ENCODE measurements at regions of chr7 and their contacts with region 1.

Region 1: DNA sequence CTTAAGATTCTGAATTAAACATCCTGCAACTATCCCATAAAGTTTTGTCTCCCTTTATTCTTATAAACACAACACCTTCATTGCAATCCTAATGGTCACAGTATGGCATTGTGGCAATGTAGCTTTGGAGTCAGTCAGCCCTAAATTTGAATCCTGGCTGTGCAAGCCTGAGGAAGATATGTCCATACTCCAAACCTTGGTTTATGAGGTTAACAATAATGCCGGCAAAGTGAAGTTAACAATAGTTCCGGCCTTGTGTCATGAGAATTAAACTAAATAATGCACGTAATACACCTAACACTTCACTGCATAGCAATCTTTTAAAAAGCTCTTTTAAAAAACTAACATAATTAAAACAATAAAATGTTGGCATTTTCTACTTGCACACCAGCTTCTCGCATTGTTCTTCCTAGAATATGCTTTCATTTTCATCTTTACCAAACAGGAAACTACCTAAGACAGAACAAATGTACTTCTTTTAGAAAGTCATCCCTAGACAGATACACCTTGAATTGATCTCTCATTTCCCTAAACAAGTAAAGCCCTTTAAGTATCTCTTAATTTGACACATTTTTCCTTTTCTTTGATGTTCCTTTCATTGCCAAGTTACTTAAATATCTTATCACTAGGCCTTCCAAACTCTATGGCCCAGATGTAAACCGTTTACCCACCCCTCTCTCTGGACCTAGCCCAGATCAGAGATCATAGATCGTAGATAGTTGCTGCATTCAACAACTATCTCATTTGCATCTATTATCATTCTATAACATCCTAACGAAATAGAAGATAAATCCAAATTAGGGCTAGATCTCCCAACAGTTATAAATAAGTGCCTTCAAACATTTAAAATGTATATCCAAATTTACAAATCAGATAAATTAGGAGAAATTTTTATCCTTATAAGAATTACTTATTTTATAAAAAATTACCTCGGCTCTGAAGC is 66.7 kb downstream of the CREB3L2 start:
- DNase-seq: peak; percentile 30
- ATAC-seq: peak; percentile 88
- H3K4me3 ChIP-seq: peak overlapping the region; percentile 73
- H3K27ac ChIP-seq: peak overlapping the region; percentile 92
- H3K4me1 ChIP-seq: peaks cover 35% of the 10 kb centered on the region
- H3K27me3 ChIP-seq: no peaks in the 10 kb centered on the region
- CTCF ChIP-seq: no peak
- EP300 ChIP-seq: peak in 1 of 2 experiments; percentile 26; a peak in 1 of 4 replicates
- POLR2A ChIP-seq: no peak
- RAD21 ChIP-seq: no peak

Region 2: GRCh38 chr7:136741941-136742340 is 1193.3 kb before region 1 on chr7:
- CTCF ChIA-PET with region 1: no interaction called
- POLR2A ChIA-PET with region 1: no interaction called
- RAD21 ChIA-PET with region 1: no interaction called
- SMC1A ChIA-PET with region 1: no interaction called
- in situ Hi-C with region 1: no loop called
- intact Hi-C with region 1: no loop called
- DNase-seq: no peak
- ATAC-seq: no peak
- H3K4me3 ChIP-seq: no peak overlapping the region
- H3K27ac ChIP-seq: no peak overlapping the region
- H3K4me1 ChIP-seq: no peaks in the 10 kb centered on the region
- H3K27me3 ChIP-seq: no peaks in the 10 kb centered on the region
- CTCF ChIP-seq: no peak
- EP300 ChIP-seq: no peak
- POLR2A ChIP-seq: no peak
- RAD21 ChIP-seq: no peak

Region 3: GRCh38 chr7:137820677-137821420 is 114.4 kb before region 1 on chr7:
- CTCF ChIA-PET with region 1: no interaction called
- POLR2A ChIA-PET with region 1: no interaction called
- RAD21 ChIA-PET with region 1: no interaction called
- SMC1A ChIA-PET with region 1: no interaction called
- in situ Hi-C with region 1: no loop called
- intact Hi-C with region 1: no loop called
- DNase-seq: no peak
- ATAC-seq: peak; percentile 91
- H3K4me3 ChIP-seq: no peak overlapping the region
- H3K27ac ChIP-seq: no peak overlapping the region
- H3K4me1 ChIP-seq: peaks cover 6% of the 10 kb centered on the region
- H3K27me3 ChIP-seq: no peaks in the 10 kb centered on the region
- CTCF ChIP-seq: no peak
- EP300 ChIP-seq: no peak; a peak in 1 of 4 replicates
- POLR2A ChIP-seq: no peak
- RAD21 ChIP-seq: no peak

Region 4: GRCh38 chr7:137920637-137921399 is 14.4 kb before region 1 on chr7:
- CTCF ChIA-PET with region 1: interaction called, 3 read pairs
- POLR2A ChIA-PET with region 1: interaction called, 14 read pairs
- RAD21 ChIA-PET with region 1: interaction called, 3 read pairs
- SMC1A ChIA-PET with region 1: interaction called, 17 read pairs
- in situ Hi-C with region 1: no loop called
- intact Hi-C with region 1: no loop called
- DNase-seq: no peak
- ATAC-seq: no peak
- H3K4me3 ChIP-seq: no peak overlapping the region
- H3K27ac ChIP-seq: no peak overlapping the region
- H3K4me1 ChIP-seq: peaks cover 30% of the 10 kb centered on the region
- H3K27me3 ChIP-seq: no peaks in the 10 kb centered on the region
- CTCF ChIP-seq: no peak
- EP300 ChIP-seq: no peak
- POLR2A ChIP-seq: no peak
- RAD21 ChIP-seq: no peak

Region 5: DNA sequence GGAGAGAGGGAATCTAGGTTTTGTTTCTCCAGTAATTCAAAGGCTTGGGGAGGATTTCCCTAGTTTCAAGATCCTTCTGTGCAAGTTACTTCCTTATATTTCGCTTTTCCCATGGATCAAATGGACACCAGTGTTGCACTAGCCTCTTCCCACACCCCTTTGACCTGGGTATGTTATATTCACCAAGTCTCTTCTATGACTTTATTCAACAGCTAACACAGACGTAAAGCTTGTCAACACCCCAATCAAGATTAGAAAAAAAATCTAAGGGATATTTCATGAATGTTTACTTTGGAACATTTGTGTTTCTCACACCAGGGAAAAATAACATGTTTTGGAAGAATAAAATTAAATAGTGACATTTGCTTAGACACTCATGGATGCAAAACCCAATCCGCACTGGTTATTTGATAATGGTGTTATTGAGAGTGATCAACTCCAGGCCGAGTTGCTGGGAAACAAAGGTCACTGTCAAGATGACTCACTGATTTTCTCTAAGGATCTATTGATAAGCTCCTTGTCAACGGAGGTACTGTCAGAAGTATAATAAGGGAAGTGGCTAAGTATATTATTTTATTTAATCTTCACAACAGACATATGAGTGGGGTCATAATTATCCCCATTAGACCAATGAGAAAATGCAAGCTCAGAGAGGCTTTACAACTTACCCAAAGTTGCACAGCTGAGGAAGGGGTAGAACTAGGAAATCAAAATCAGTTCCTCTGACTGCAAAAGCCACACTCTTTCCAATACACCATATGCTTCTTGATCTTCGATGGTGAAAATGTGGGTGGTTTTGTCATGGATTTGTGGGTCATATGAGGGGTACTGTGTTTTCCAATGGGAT is 14.4 kb after region 1 on chr7:
- CTCF ChIA-PET with region 1: interaction called, 8 read pairs
- POLR2A ChIA-PET with region 1: interaction called, 5 read pairs
- RAD21 ChIA-PET with region 1: interaction called, 3 read pairs
- SMC1A ChIA-PET with region 1: interaction called, 11 read pairs
- in situ Hi-C with region 1: no loop called
- intact Hi-C with region 1: no loop called
- DNase-seq: no peak
- ATAC-seq: no peak
- H3K4me3 ChIP-seq: no peak overlapping the region
- H3K27ac ChIP-seq: no peak overlapping the region
- H3K4me1 ChIP-seq: peaks cover 9% of the 10 kb centered on the region; the same call in 1 of the 2 replicates
- H3K27me3 ChIP-seq: no peaks in the 10 kb centered on the region
- CTCF ChIP-seq: no peak
- EP300 ChIP-seq: no peak
- POLR2A ChIP-seq: no peak
- RAD21 ChIP-seq: no peak

Region 6: DNA sequence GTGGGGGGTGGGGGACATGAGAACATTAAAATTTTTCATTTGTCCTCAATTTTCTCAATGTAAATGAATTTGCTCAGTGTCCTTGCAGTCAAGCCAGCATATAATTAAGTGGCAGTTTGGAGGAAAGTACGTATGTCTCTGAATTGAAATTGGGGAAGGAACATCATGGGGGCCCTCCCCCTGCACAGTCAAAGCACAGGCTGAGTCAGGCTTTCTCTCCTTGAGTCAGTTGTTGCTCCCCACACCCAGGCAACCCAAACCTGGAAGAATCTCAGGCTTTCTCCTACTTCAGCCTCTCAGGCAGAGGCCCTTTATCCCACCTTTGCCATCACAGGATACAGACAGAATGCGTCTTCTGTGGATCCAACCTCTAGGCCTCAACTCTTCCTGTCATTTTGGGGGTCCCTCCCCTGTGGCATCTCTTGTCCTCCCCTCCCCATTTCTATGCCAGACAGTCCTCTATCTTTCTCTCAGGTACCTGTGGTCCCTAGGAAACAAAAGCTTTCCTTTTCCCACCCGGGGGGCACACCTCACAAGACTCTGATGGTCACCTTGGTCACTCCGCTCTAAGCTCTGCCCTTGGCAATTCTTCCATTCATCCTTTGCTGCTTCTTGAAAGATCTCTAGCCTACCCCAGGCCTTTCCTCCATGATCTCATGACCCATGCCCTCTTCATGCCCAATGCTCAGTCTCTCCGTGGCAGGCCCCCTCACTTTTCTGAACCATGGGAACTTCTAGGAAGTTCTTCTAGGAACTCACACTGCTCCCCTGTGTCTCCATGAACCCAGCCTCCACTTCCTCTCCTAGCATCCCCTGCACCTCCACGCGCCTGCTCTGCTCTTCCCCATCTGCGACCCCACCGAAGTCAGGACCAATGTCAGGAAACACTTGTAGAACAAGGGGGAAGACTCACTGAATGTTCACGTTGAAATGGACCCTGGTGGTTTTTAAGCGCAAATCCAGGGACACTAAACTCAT is 26.3 kb after region 1 on chr7:
- CTCF ChIA-PET with region 1: interaction called, 3 read pairs
- POLR2A ChIA-PET with region 1: no interaction called
- RAD21 ChIA-PET with region 1: interaction called, 13 read pairs
- SMC1A ChIA-PET with region 1: interaction called, 5 read pairs
- in situ Hi-C with region 1: no loop called
- intact Hi-C with region 1: no loop called
- DNase-seq: no peak
- ATAC-seq: peak; percentile 90
- H3K4me3 ChIP-seq: no peak overlapping the region
- H3K27ac ChIP-seq: peak overlapping the region; percentile 14
- H3K4me1 ChIP-seq: peaks cover 30% of the 10 kb centered on the region
- H3K27me3 ChIP-seq: no peaks in the 10 kb centered on the region
- CTCF ChIP-seq: no peak
- EP300 ChIP-seq: no peak
- POLR2A ChIP-seq: no peak
- RAD21 ChIP-seq: no peak

Region 7: GRCh38 chr7:137978464-137979237 is 43.4 kb after region 1 on chr7:
- CTCF ChIA-PET with region 1: interaction called, 7 read pairs
- POLR2A ChIA-PET with region 1: interaction called, 3 read pairs
- RAD21 ChIA-PET with region 1: interaction called, 7 read pairs
- SMC1A ChIA-PET with region 1: interaction called, 14 read pairs
- in situ Hi-C with region 1: no loop called
- intact Hi-C with region 1: no loop called
- DNase-seq: no peak
- ATAC-seq: no peak
- H3K4me3 ChIP-seq: no peak overlapping the region
- H3K27ac ChIP-seq: peak overlapping the region; percentile 9; the same call in 1 of the 2 replicates
- H3K4me1 ChIP-seq: peaks cover 69% of the 10 kb centered on the region
- H3K27me3 ChIP-seq: no peaks in the 10 kb centered on the region
- CTCF ChIP-seq: no peak
- EP300 ChIP-seq: no peak
- POLR2A ChIP-seq: no peak
- RAD21 ChIP-seq: no peak

Region 8: GRCh38 chr7:137985253-137985896 is 50.2 kb after region 1 on chr7:
- CTCF ChIA-PET with region 1: interaction called, 7 read pairs
- POLR2A ChIA-PET with region 1: interaction called, 6 read pairs
- RAD21 ChIA-PET with region 1: interaction called, 7 read pairs
- SMC1A ChIA-PET with region 1: interaction called, 14 read pairs
- in situ Hi-C with region 1: no loop called
- intact Hi-C with region 1: loop called (anchors 5 kb)
- DNase-seq: peak; percentile 69
- ATAC-seq: peak; percentile 58
- H3K4me3 ChIP-seq: peak overlapping the region; percentile 4; the same call in 1 of the 2 replicates
- H3K27ac ChIP-seq: peak overlapping the region; percentile 95
- H3K4me1 ChIP-seq: peaks cover 87% of the 10 kb centered on the region
- H3K27me3 ChIP-seq: no peaks in the 10 kb centered on the region
- CTCF ChIP-seq: no peak
- EP300 ChIP-seq: peak; percentile 83 to 90; a peak in 3 of 4 replicates
- POLR2A ChIP-seq: peak; percentile 41; the same call in 1 of the 2 replicates
- RAD21 ChIP-seq: no peak

Region 9: DNA sequence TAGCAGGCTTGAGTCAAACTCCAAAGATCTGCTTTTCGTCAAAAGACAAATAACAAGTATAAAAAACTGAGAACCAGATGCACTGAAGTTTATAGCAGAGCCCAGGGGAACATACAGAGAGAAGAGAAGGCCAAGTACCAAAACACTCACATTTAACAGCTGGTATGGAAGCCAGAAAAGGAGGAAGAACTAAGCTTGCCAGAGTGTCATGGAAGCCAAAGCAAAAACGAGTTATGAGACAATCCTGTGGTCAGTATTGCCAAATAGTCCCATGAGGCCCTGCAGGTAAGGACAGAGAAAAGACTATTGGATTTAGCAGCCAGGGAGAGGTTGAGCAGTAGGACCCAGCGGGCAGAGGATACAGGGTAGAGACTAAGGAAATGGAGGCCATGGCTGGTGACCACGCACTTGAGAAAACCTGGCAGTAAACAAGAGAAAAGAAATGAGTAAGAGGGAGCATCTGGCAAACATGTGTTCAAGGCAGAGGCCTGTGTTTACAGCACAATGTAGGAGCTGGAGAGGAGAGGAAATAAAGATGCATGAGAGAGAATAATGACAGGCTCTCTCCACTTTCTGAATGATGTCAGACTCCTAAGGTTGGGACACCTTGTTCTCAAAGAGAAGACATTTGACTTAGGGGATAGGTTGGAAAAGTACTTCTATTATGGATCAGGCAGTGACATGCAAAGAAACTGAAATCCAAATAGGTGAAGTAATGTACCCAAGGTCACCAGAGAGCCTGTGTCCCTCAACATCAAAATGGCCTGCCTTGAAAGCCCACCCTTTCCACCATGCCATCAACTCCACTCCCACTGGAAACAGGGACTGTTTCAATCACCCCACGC is 57.6 kb after region 1 on chr7:
- CTCF ChIA-PET with region 1: interaction called, 132 read pairs
- POLR2A ChIA-PET with region 1: interaction called, 18 read pairs
- RAD21 ChIA-PET with region 1: interaction called, 43 read pairs
- SMC1A ChIA-PET with region 1: interaction called, 57 read pairs
- in situ Hi-C with region 1: no loop called
- intact Hi-C with region 1: loop called (anchors 5 kb)
- DNase-seq: no peak
- ATAC-seq: peak; percentile 76
- H3K4me3 ChIP-seq: peak overlapping the region; percentile 26; the same call in 1 of the 2 replicates
- H3K27ac ChIP-seq: peak overlapping the region; percentile 43
- H3K4me1 ChIP-seq: peaks cover 55% of the 10 kb centered on the region
- H3K27me3 ChIP-seq: no peaks in the 10 kb centered on the region
- CTCF ChIP-seq: no peak
- EP300 ChIP-seq: peak; percentile 6 to 70; a peak in 2 of 4 replicates
- POLR2A ChIP-seq: no peak
- RAD21 ChIP-seq: no peak

Region 10: DNA sequence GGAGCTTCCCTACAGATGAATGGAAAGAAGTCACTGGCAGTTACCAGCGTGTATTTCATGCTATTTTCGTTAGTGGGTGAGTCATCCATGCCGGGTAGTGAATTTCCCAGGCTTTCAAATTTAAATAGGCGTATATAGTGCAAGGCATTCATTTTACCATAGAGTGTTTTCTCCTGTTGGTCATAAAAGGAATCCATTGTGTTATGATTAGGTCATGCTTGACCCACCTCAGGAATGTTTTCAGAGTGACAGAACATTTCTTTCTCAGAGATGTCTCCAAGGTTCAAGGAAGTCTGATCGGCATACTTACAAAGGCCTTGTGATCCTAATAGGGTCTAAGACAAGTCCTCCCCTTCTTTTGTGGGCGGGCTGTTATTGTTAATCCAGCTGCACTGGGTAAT is 251.7 kb after region 1 on chr7:
- CTCF ChIA-PET with region 1: no interaction called
- POLR2A ChIA-PET with region 1: no interaction called
- RAD21 ChIA-PET with region 1: no interaction called
- SMC1A ChIA-PET with region 1: no interaction called
- in situ Hi-C with region 1: no loop called
- intact Hi-C with region 1: no loop called
- DNase-seq: no peak
- ATAC-seq: no peak
- H3K4me3 ChIP-seq: no peak overlapping the region
- H3K27ac ChIP-seq: no peak overlapping the region
- H3K4me1 ChIP-seq: no peaks in the 10 kb centered on the region
- H3K27me3 ChIP-seq: no peaks in the 10 kb centered on the region
- CTCF ChIP-seq: no peak
- EP300 ChIP-seq: no peak
- POLR2A ChIP-seq: no peak
- RAD21 ChIP-seq: no peak